Heart left ventricle (tissue), 16 donors: ENCODE measurements at regions of chr19 and their contacts with region 1.

Region 1: DNA sequence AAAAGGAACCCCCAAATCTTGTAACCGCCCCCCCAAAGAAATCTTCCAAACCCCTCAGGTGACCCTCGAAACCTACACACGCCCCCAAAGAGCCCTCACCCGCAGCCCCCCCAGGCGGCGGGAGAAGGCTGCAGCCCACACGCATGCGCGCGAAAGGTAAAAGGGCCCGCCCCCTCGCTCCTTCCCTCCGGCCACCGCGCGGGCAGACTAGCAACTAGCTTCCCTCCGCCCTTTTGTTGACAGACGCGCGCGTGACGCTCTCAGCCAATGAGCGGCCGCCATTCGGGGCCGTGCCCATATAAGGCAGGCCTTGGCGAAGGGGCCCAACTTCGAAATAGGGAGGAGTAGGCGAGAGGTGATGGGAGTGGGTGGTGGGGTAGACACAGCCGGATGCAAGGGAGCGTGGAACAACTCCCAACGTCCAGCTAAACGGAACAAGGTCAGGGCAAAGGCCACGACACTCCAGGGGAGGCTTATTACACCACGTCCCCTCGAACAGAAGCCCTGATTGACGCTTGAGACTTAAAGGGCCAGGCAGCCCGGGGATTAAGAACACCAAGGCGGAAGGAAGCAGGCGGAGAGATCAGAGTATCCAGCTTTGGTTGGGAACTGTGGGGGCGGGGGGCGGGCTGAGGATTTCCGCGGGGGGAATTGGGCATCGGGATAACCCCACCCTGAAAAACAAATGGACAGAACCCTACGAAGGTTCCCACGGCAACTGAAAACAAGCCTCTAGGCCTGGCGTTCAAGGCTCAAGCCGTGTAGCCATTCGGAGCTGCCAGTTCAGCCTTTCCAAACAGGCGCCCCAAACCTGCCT is 13.3 kb downstream of the FBXO46 start:
- DNase-seq: peak; percentile 99 to 100 (median 99)
- ATAC-seq: peak; percentile 97 to 98 (median 98)
- H3K4me3 ChIP-seq: peak overlapping the region; percentile 47 to 77 (median 68)
- H3K27ac ChIP-seq: peak overlapping the region; percentile 78 to 96 (median 94)
- H3K4me1 ChIP-seq: peaks cover 0 to 38% (median 16%) of the 10 kb centered on the region in 12 donors
- H3K27me3 ChIP-seq: no peaks in the 10 kb centered on the region
- CTCF ChIP-seq: peak in 7 of 12 donors; percentile 8 to 38 (median 19)
- POLR2A ChIP-seq: peak in 1 of 2 donors; percentile 43

Region 2: GRCh38 chr19:45730389-45731288 is 13.3 kb after region 1 on chr19 and contains the start of gene FBXO46:
- intact Hi-C with region 1: loop called in 1 of 10 experiments (anchors 2 kb)
- DNase-seq: peak; percentile 97 to 99 (median 98)
- ATAC-seq: peak; percentile 98 to 99 (median 99)
- H3K4me3 ChIP-seq: peak within 1 kb of the TSS; percentile 66 to 93 (median 80)
- H3K27ac ChIP-seq: peak within 1 kb of the TSS in 11 of 12 donors; percentile 57 to 84 (median 62)
- H3K4me1 ChIP-seq: peaks cover 0 to 22% (median 12%) of the 10 kb centered on the region in 12 donors
- H3K27me3 ChIP-seq: no peaks in the 10 kb centered on the region
- CTCF ChIP-seq: no peak
- POLR2A ChIP-seq: peak in 1 of 2 donors; percentile 73
- total RNA-seq, gene FBXO46: 9.1 to 17.8 (median 10.3) TPM

Region 3: DNA sequence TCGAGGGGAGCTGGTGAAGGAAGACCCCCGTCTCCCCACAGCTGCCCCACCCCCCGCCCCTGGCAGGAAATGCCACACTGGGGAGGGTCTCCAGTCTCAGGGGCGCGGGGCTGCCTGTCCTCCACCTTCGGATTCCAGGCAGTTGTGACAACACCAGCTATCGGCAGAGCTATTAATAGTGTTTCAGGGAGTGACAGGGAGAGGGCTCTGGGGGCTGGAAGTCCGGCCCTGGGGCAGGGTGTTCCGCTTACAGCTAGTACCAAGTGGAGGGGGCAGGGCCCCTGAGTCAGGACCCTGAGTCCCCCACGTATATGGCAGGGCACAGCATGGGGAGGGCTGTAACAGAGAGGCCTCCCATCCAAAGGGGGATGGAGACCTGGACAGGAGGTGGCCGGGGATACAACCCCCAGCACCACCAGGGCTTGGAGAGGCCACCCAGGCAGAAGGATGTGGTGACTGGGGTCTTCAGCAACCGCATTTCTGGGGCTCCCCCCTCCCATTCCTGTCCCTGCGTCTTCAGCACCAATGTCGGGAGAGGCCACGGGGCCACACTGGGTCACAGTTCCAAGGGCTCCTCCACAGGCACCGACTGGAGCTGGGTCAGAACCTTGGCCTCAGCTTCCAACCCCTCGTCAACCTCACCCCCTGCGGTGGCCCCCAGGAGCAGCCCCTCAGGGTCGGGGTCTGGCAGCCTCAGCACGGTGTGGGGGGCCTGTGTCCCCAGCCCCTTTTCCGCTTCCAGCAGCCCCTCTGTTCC is 47.7 kb after region 1 on chr19:
- intact Hi-C with region 1: loop called in 8 of 10 experiments (anchors 1 to 10 kb)
- DNase-seq: peak; percentile 64 to 86 (median 68)
- ATAC-seq: peak; percentile 16 to 48 (median 32)
- H3K4me3 ChIP-seq: peak overlapping the region in 8 of 12 donors; percentile 12 to 85 (median 40)
- H3K27ac ChIP-seq: peak overlapping the region; percentile 86 to 99 (median 97)
- H3K4me1 ChIP-seq: peaks cover 10 to 53% (median 42%) of the 10 kb centered on the region in 12 donors
- H3K27me3 ChIP-seq: peaks cover 0 to 35% (median 0%) of the 10 kb centered on the region in 9 donors
- CTCF ChIP-seq: no peak
- POLR2A ChIP-seq: peak; percentile 10 to 66

Region 4: DNA sequence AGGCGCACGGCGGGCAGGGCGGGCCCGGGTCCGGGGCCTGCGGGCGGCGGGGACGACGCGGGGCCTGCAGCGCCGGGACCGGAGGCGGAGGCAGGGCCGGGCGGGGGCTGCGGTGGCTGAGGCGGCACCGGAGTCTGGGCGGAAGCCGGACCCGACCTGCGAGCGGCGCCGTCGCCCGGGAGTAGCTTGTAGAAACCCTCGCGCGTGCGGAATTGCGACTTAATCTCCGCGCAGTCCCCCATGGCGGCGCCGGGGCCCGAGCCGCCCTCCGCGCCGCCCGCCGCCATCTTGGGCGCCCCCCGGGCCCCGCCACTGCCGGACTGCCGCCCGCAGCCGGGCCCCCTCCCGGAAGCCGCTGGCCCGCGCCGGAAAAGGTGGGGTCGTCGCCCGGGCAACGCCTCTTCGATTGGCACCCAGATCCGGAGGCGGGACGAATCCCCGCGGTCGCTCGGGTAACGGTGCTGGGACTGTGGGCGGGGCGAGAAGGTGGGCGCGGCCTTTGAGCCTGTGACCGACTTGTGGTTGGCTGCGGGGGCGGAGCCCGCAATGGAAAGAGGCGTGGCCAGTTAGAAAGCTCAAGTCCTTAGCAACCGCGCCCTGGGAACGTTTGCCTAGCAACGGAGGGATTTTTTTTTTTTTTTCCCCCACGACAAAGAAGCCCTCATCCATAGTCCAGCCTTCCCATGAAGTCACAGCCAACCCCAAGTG is 75.2 kb after region 1 on chr19 and contains the start of gene DMWD:
- intact Hi-C with region 1: loop called in 1 of 10 experiments (anchors 2 kb)
- DNase-seq: peak; percentile 99 to 100 (median 100)
- ATAC-seq: peak; percentile 96 to 99 (median 97)
- H3K4me3 ChIP-seq: peak within 1 kb of the TSS; percentile 32 to 97 (median 72)
- H3K27ac ChIP-seq: peak within 1 kb of the TSS; percentile 70 to 92 (median 84)
- H3K4me1 ChIP-seq: peaks cover 0 to 41% (median 24%) of the 10 kb centered on the region in 12 donors
- H3K27me3 ChIP-seq: peaks cover 0 to 53% (median 0%) of the 10 kb centered on the region in 9 donors
- CTCF ChIP-seq: no peak
- POLR2A ChIP-seq: peak in 1 of 2 donors; percentile 70
- total RNA-seq, gene DMWD: 47.2 to 109 (median 67.3) TPM